Mammary epithelial cell (primary cell): ENCODE measurements at regions of chr2 and their contacts with region 1.

Region 1: GRCh38 chr2:202317080-202317857 is 51.7 kb downstream of the NOP58 start:
- DNase-seq: peak; percentile 58
- H3K4me3 ChIP-seq: no peak overlapping the region
- H3K27ac ChIP-seq: no peak overlapping the region
- H3K4me1 ChIP-seq: peaks cover 10% of the 10 kb centered on the region
- H3K27me3 ChIP-seq: no peaks in the 10 kb centered on the region
- CTCF ChIP-seq: no peak

Region 2: GRCh38 chr2:202290970-202291369 is 26.3 kb before region 1 on chr2:
- CTCF ChIA-PET with region 1: interaction called, 11 read pairs
- dilution Hi-C with region 1: no loop called
- in situ Hi-C with region 1: no loop called
- intact Hi-C with region 1: no loop called
- DNase-seq: no peak
- H3K4me3 ChIP-seq: no peak overlapping the region
- H3K27ac ChIP-seq: no peak overlapping the region
- H3K4me1 ChIP-seq: peaks cover 10% of the 10 kb centered on the region
- H3K27me3 ChIP-seq: no peaks in the 10 kb centered on the region
- CTCF ChIP-seq: no peak